B cell (primary cell): ENCODE measurements at regions of chr20 and their contacts with region 1.

Region 1: GRCh38 chr20:33666293-33667244 is at the start of gene ACTL10:
- DNase-seq: peak; percentile 92
- ATAC-seq: peak; percentile 73
- H3K4me3 ChIP-seq: peak within 1 kb of the TSS; percentile 26 to 79 (median 68)
- H3K4me3 Mint-ChIP-seq: peak within 1 kb of the TSS; percentile 98
- H3K27ac ChIP-seq: peak within 1 kb of the TSS; percentile 55 to 59
- H3K27ac Mint-ChIP-seq: peak within 1 kb of the TSS; percentile 96
- H3K4me1 ChIP-seq: peaks cover 18 to 44% of the 10 kb centered on the region in 2 donors
- H3K4me1 Mint-ChIP-seq: peaks cover 36% of the 10 kb centered on the region
- H3K27me3 ChIP-seq: no peaks in the 10 kb centered on the region
- H3K27me3 Mint-ChIP-seq: no peaks in the 10 kb centered on the region
- CTCF ChIP-seq: no peak
- total RNA-seq, gene ACTL10: 6.3 and 9.0 TPM in 2 replicates

Region 2: GRCh38 chr20:33443512-33444239 is 222.9 kb before region 1 on chr20 and contains the start of gene SNTA1:
- CTCF ChIA-PET with region 1: interaction called, 18 read pairs
- POLR2A ChIA-PET with region 1: interaction called, 3 read pairs
- intact Hi-C with region 1: loop called (anchors 1 kb)
- DNase-seq: peak; percentile 90
- ATAC-seq: peak; percentile 89
- H3K4me3 ChIP-seq: peak within 1 kb of the TSS; percentile 70 to 87 (median 80)
- H3K4me3 Mint-ChIP-seq: peak within 1 kb of the TSS; percentile 94
- H3K27ac ChIP-seq: peak within 1 kb of the TSS; percentile 51 to 58
- H3K27ac Mint-ChIP-seq: peak within 1 kb of the TSS; percentile 91
- H3K4me1 ChIP-seq: peaks cover 13 to 23% of the 10 kb centered on the region in 2 donors
- H3K4me1 Mint-ChIP-seq: peaks cover 31% of the 10 kb centered on the region
- H3K27me3 ChIP-seq: no peaks in the 10 kb centered on the region
- H3K27me3 Mint-ChIP-seq: no peaks in the 10 kb centered on the region
- CTCF ChIP-seq: no peak
- total RNA-seq, gene SNTA1: 9.9 and 11.5 TPM in 2 replicates

Region 3: DNA sequence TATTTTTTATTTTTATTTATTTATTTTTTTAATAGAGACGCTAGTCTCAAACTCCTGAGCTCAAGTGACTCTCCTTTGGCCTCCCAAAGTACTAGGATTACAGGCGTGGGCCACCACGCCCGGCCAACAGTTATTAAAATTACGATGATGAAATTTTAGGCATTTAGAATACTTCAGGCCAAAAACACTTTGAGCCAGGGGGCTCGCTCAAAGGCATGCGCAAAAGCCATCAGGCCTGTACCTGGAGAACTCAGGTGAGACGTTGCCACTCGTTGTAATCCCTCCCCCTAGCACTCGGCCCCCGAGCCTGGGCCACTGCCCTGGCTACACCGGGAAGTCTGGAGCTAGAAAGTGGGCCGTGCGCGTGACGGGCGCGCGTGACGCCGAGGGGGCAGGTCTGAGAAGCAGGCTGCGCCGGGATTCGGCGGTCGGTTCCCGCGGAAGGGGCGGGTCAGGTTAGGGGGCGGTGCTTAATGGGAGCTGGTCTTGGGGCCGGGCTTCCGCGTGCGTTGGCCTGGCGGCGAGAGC is 177.0 kb before region 1 on chr20:
- CTCF ChIA-PET with region 1: interaction called, 17 read pairs
- POLR2A ChIA-PET with region 1: interaction called, 5 read pairs
- intact Hi-C with region 1: loop called (anchors 1 kb)
- DNase-seq: peak; percentile 99
- ATAC-seq: peak; percentile 97
- H3K4me3 ChIP-seq: peak overlapping the region; percentile 24 to 73 (median 68)
- H3K4me3 Mint-ChIP-seq: peak overlapping the region; percentile 93
- H3K27ac ChIP-seq: peak overlapping the region; percentile 97 to 99
- H3K27ac Mint-ChIP-seq: peak overlapping the region; percentile 95
- H3K4me1 ChIP-seq: peaks cover 9 to 19% of the 10 kb centered on the region in 2 donors
- H3K4me1 Mint-ChIP-seq: peaks cover 16% of the 10 kb centered on the region
- H3K27me3 ChIP-seq: no peaks in the 10 kb centered on the region
- H3K27me3 Mint-ChIP-seq: no peaks in the 10 kb centered on the region
- CTCF ChIP-seq: no peak

Region 4: GRCh38 chr20:33647603-33648395 is 18.8 kb before region 1 on chr20:
- CTCF ChIA-PET with region 1: interaction called, 53 read pairs
- POLR2A ChIA-PET with region 1: no interaction called
- intact Hi-C with region 1: no loop called
- DNase-seq: no peak
- ATAC-seq: no peak
- H3K4me3 ChIP-seq: no peak overlapping the region
- H3K4me3 Mint-ChIP-seq: no peak overlapping the region
- H3K27ac ChIP-seq: no peak overlapping the region
- H3K27ac Mint-ChIP-seq: no peak overlapping the region
- H3K4me1 ChIP-seq: no peaks in the 10 kb centered on the region
- H3K4me1 Mint-ChIP-seq: peaks cover 5% of the 10 kb centered on the region
- H3K27me3 ChIP-seq: no peaks in the 10 kb centered on the region
- H3K27me3 Mint-ChIP-seq: no peaks in the 10 kb centered on the region
- CTCF ChIP-seq: no peak

Region 5: GRCh38 chr20:33686100-33686983 is 19.8 kb after region 1 on chr20 and contains the start of gene E2F1:
- CTCF ChIA-PET with region 1: interaction called, 9 read pairs
- POLR2A ChIA-PET with region 1: interaction called, 6 read pairs
- intact Hi-C with region 1: loop called (anchors 1 kb)
- DNase-seq: peak; percentile 95
- ATAC-seq: peak; percentile 96
- H3K4me3 ChIP-seq: peak within 1 kb of the TSS; percentile 28 to 56 (median 47)
- H3K4me3 Mint-ChIP-seq: peak within 1 kb of the TSS; percentile 92
- H3K27ac ChIP-seq: peak within 1 kb of the TSS; percentile 50 to 65
- H3K27ac Mint-ChIP-seq: peak within 1 kb of the TSS; percentile 89
- H3K4me1 ChIP-seq: peaks cover 16 to 22% of the 10 kb centered on the region in 2 donors
- H3K4me1 Mint-ChIP-seq: peaks cover 27% of the 10 kb centered on the region
- H3K27me3 ChIP-seq: no peaks in the 10 kb centered on the region
- H3K27me3 Mint-ChIP-seq: no peaks in the 10 kb centered on the region
- CTCF ChIP-seq: peak; percentile 33
- total RNA-seq, gene E2F1: 2.4 and 2.7 TPM in 2 replicates

Region 6: DNA sequence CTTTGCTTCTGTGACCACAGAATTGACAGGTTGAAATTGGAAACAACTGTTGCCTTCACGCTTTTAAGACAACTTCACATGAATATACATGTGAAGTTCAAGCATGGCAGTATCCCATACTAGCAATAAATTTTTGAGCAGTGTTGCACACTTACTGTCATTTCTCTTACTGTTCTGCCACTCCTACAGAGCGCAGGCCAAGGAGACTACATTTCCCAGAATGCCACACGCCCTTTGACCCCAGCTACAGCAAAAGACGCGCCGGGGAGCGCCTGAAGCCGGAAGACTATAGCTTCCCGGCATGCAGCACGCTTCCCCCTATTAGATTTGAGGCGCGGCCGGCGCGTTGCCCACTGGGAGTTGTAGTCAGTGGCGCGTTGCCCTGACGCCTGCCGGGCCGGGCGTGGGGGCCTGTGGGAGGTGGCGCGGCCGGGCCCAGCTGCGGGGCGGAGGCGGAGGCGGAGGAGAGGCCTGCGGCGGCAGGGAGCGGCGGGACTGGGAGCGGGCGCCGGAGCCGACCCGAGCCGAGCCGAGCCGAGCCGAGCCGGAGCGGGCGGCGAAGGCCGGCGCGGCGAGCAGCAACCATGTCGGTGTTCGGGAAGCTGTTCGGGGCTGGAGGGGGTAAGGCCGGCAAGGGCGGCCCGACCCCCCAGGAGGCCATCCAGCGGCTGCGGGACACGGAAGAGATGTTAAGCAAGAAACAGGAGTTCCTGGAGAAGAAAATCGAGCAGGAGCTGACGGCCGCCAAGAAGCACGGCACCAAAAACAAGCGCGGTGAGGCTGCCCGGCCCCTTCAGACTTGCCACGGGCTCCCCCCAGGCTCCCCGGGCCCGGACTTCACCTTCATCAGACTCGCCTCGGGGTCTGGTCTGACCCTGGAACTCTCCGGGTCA is 144.6 kb after region 1 on chr20 and contains the start of gene CHMP4B:
- CTCF ChIA-PET with region 1: no interaction called
- POLR2A ChIA-PET with region 1: no interaction called
- intact Hi-C with region 1: loop called (anchors 1 kb)
- DNase-seq: peak; percentile 98
- ATAC-seq: peak; percentile 96
- H3K4me3 ChIP-seq: peak within 1 kb of the TSS; percentile 86 to 97 (median 92)
- H3K4me3 Mint-ChIP-seq: peak within 1 kb of the TSS; percentile 97
- H3K27ac ChIP-seq: peak within 1 kb of the TSS; percentile 65 to 90
- H3K27ac Mint-ChIP-seq: peak within 1 kb of the TSS; percentile 96
- H3K4me1 ChIP-seq: peaks cover 23 to 30% of the 10 kb centered on the region in 2 donors
- H3K4me1 Mint-ChIP-seq: peaks cover 45% of the 10 kb centered on the region
- H3K27me3 ChIP-seq: no peaks in the 10 kb centered on the region
- H3K27me3 Mint-ChIP-seq: peaks cover 4% of the 10 kb centered on the region
- CTCF ChIP-seq: no peak
- total RNA-seq, gene CHMP4B: 81.6 and 83.9 TPM in 2 replicates

Region 7: DNA sequence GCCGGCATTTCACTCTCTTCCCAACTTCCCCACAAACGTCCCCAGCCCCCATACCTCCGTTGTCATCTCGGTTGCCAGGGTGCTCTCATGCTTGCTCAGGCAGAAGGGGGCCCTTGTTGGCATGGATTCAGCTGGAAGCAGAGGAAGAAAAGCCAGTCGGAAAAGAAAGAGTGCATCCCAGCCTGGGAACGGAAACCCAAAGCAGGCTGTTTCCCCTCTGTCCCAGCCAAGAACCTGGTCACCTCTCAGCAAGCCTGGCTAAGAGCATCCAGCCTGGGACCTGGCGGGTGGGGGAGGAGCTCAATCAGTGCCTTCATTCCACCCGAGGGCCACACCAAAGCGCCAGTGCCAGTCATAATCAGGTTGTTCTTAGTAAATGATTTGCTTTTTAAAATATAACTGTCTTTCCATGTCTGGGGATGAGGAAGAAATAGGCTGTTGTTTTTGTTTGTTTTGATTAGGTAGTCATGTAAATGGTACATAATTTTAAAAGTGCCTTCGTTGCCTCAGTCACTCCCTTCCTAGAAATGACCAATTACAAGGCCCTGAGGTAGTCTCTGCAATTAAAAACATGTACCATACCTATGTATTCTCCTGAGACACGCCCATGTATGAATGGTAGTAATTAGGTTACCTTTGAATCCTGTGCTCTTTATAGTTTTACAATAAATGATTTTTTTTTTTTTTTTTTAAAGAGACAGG is 165.7 kb after region 1 on chr20:
- CTCF ChIA-PET with region 1: no interaction called
- POLR2A ChIA-PET with region 1: no interaction called
- intact Hi-C with region 1: no loop called
- DNase-seq: no peak
- ATAC-seq: no peak
- H3K4me3 ChIP-seq: no peak overlapping the region
- H3K4me3 Mint-ChIP-seq: no peak overlapping the region
- H3K27ac ChIP-seq: no peak overlapping the region
- H3K27ac Mint-ChIP-seq: no peak overlapping the region
- H3K4me1 ChIP-seq: peaks cover 24 to 28% of the 10 kb centered on the region in 2 donors
- H3K4me1 Mint-ChIP-seq: peaks cover 65% of the 10 kb centered on the region
- H3K27me3 ChIP-seq: no peaks in the 10 kb centered on the region
- H3K27me3 Mint-ChIP-seq: no peaks in the 10 kb centered on the region
- CTCF ChIP-seq: no peak

Region 8: GRCh38 chr20:34111702-34112599 is 445.4 kb after region 1 on chr20 and contains the start of gene EIF2S2:
- CTCF ChIA-PET with region 1: interaction called, 7 read pairs
- POLR2A ChIA-PET with region 1: interaction called, 3 read pairs
- intact Hi-C with region 1: loop called (anchors 5 kb)
- DNase-seq: peak; percentile 99
- ATAC-seq: peak; percentile 91
- H3K4me3 ChIP-seq: peak within 1 kb of the TSS; percentile 63 to 97 (median 90)
- H3K4me3 Mint-ChIP-seq: peak within 1 kb of the TSS; percentile 99
- H3K27ac ChIP-seq: peak within 1 kb of the TSS; percentile 80 to 95
- H3K27ac Mint-ChIP-seq: peak within 1 kb of the TSS; percentile 99
- H3K4me1 ChIP-seq: peaks cover 21 to 28% of the 10 kb centered on the region in 2 donors
- H3K4me1 Mint-ChIP-seq: peaks cover 45% of the 10 kb centered on the region
- H3K27me3 ChIP-seq: no peaks in the 10 kb centered on the region
- H3K27me3 Mint-ChIP-seq: no peaks in the 10 kb centered on the region
- CTCF ChIP-seq: no peak
- total RNA-seq, gene EIF2S2: 26.4 and 27.7 TPM in 2 replicates

Region 9: DNA sequence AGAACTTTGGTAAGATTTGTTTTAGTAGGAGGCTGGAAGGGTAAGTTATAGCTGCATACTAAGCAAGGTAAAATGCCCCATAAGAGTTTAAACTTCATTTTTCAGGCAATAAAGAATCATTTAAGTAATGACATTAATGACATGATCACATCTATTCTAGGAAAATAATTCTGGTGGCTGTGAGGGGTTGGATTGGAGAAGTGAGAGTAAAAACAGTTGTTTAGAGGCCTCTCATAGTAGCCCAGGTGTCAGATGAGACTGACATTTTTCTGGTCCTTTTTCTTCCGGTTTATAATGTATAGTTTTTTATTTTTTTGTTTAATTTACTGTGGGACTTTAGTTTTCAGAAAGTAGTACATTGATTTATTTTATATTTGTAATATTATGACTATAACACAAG is 737.3 kb after region 1 on chr20:
- CTCF ChIA-PET with region 1: no interaction called
- POLR2A ChIA-PET with region 1: no interaction called
- intact Hi-C with region 1: no loop called
- DNase-seq: peak; percentile 52
- ATAC-seq: peak; percentile 83
- H3K4me3 ChIP-seq: no peak overlapping the region
- H3K4me3 Mint-ChIP-seq: peak overlapping the region; percentile 12
- H3K27ac ChIP-seq: peak overlapping the region; percentile 27 to 67
- H3K27ac Mint-ChIP-seq: peak overlapping the region; percentile 54
- H3K4me1 ChIP-seq: peaks cover 38 to 41% of the 10 kb centered on the region in 2 donors
- H3K4me1 Mint-ChIP-seq: peaks cover 50% of the 10 kb centered on the region
- H3K27me3 ChIP-seq: no peaks in the 10 kb centered on the region
- H3K27me3 Mint-ChIP-seq: no peaks in the 10 kb centered on the region
- CTCF ChIP-seq: no peak